ENCODE measurements at regions of chr1 and their contacts with region 1.

Region 1: DNA sequence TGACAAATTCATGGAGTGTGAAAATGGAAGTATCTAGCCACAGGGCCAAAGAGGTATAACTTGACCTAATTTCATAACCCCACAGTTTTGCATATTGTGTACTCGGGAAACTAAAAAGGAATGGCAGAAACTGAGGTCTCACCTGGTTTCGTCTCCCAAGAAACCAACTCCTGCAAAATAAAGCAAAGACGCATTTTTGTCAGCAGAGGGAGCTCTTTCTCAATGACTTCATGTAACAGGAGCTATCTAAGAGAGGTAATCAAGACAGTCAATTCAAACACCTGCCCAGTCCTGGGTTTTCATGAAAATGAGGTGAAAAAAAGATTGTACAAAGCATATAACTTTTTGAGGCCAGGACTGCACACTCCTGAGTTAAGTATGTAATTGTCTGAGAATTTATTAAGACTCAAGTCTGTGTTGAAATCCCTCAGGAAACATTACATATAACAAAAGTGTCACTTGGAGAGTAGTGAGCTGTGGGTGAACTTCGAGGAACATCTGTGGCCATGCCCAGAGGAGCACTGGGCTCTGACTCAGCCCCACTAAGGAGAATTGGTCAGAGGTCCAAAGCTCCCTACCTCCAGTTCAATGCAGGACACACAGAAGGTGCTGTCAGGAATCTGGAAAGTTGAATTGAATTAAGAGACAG is 17.6 kb downstream of the FCRL4 start:
- DNase-seq: peak in 2 of 5 donors; percentile 32 to 36
- H3K4me3 ChIP-seq: no peak overlapping the region
- H3K4me3 Mint-ChIP-seq: no peak overlapping the region
- H3K27ac ChIP-seq: no peak overlapping the region
- H3K27ac Mint-ChIP-seq: peak overlapping the region in 1 of 8 donors; percentile 7
- H3K4me1 ChIP-seq: no peaks in the 10 kb centered on the region
- H3K4me1 Mint-ChIP-seq: peaks cover 4% of the 10 kb centered on the region in 3 donors
- H3K27me3 ChIP-seq: no peaks in the 10 kb centered on the region
- H3K27me3 Mint-ChIP-seq: peaks cover 11 to 23% of the 10 kb centered on the region in 2 donors

Region 2: DNA sequence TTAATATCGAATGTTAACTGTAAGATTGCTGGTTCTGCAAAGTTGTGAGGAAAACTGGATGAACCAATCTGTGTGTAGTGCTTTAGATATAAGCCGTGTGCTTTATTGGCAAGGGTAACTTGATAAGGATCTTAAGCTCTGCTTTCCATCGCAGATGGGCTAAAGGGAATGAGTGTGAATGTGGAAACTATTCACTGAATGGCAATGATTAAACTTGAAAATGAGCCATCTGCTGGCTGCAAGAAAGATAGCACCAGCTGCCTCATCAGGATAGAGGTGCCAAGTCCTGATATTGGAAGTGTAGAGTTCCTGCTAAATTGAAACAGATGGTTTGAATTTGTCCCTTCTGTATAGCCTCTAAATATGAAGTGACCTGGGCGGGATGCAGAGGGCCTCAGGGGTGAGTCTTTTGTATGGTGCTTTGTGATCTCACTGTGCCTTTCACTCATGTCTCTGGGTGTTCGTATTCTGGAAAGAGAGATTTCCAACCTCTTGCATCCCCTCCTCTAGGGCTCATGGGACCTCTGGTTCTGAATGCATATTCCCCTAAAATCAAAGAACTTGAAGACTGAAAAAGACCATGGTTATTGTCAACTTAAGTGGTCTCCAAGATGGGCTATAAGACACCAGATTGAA is 111.1 kb after region 1 on chr1:
- CTCF ChIA-PET with region 1: interaction called, 11 read pairs
- POLR2A ChIA-PET with region 1: no interaction called
- DNase-seq: no peak
- H3K4me3 ChIP-seq: no peak overlapping the region
- H3K4me3 Mint-ChIP-seq: peak overlapping the region in 2 of 7 donors; percentile 50 to 56
- H3K27ac ChIP-seq: no peak overlapping the region
- H3K27ac Mint-ChIP-seq: peak overlapping the region in 3 of 8 donors; percentile 63 to 66 (median 63)
- H3K4me1 ChIP-seq: no peaks in the 10 kb centered on the region
- H3K4me1 Mint-ChIP-seq: peaks cover 60 to 75% (median 72%) of the 10 kb centered on the region in 3 donors
- H3K27me3 ChIP-seq: no peaks in the 10 kb centered on the region
- H3K27me3 Mint-ChIP-seq: peaks cover 0 to 1% of the 10 kb centered on the region in 2 donors

Region 3: GRCh38 chr1:157771661-157772425 is 191.5 kb after region 1 on chr1:
- CTCF ChIA-PET with region 1: interaction called, 11 read pairs
- POLR2A ChIA-PET with region 1: no interaction called
- DNase-seq: no peak
- H3K4me3 ChIP-seq: no peak overlapping the region
- H3K4me3 Mint-ChIP-seq: no peak overlapping the region
- H3K27ac ChIP-seq: no peak overlapping the region
- H3K27ac Mint-ChIP-seq: peak overlapping the region in 4 of 8 donors; percentile 19 to 74 (median 54)
- H3K4me1 ChIP-seq: no peaks in the 10 kb centered on the region
- H3K4me1 Mint-ChIP-seq: peaks cover 13 to 30% (median 27%) of the 10 kb centered on the region in 3 donors
- H3K27me3 ChIP-seq: no peaks in the 10 kb centered on the region
- H3K27me3 Mint-ChIP-seq: peaks cover 0 to 5% of the 10 kb centered on the region in 2 donors